WTC11 (cell line): ENCODE measurements at regions of chr9 and their contacts with region 1.

Region 1: GRCh38 chr9:33225319-33226149 is 14.4 kb upstream of the SPINK4 start:
- DNase-seq: peak; percentile 52
- ATAC-seq: no peak
- H3K4me3 Mint-ChIP-seq: no peak overlapping the region
- H3K27ac Mint-ChIP-seq: no peak overlapping the region; the same call in 1 of the 2 replicates
- H3K4me1 Mint-ChIP-seq: no peaks in the 10 kb centered on the region
- H3K27me3 Mint-ChIP-seq: no peaks in the 10 kb centered on the region
- CTCF ChIP-seq: peak; percentile 53

Region 2: DNA sequence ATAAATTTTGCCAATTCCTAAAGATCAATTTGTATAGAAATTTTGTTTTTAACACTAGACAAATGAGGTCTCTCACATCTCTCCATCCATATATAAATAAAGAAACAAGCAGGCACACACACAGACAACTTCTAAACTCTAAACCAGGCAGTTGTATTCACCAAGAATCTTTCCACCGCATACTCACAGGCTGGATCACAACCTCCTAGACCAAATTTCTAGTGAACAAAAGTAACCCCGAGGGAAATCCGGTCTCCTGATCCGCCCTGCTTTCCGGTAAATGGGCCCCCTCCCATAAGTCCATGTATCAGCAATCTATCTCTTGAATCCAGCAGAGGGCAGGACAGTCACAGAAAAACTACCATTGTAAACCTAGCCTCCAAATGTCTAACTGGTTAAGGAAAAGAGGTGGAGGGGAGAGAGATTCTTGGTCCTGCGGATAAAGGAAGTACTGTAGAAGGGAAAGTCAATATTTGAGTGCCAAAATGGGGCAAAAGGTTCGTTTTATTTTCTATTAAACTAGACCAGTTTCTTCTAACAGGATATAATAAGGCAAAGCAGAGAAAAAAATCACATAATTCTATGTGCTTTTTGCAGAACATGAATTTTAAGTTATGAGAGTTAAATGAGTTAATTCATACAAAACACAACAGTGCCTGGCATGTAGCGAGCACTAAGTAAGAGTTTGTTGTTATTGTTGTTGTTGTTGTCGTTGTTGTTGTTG is 144.2 kb before region 1 on chr9:
- CTCF ChIA-PET with region 1: interaction called, 11 read pairs
- POLR2A ChIA-PET with region 1: no interaction called
- DNase-seq: peak; percentile 42
- ATAC-seq: peak; percentile 70
- H3K4me3 Mint-ChIP-seq: no peak overlapping the region
- H3K27ac Mint-ChIP-seq: no peak overlapping the region
- H3K4me1 Mint-ChIP-seq: no peaks in the 10 kb centered on the region
- H3K27me3 Mint-ChIP-seq: peaks cover 10% of the 10 kb centered on the region
- CTCF ChIP-seq: peak; percentile 26; the same call in 1 of the 2 replicates

Region 3: DNA sequence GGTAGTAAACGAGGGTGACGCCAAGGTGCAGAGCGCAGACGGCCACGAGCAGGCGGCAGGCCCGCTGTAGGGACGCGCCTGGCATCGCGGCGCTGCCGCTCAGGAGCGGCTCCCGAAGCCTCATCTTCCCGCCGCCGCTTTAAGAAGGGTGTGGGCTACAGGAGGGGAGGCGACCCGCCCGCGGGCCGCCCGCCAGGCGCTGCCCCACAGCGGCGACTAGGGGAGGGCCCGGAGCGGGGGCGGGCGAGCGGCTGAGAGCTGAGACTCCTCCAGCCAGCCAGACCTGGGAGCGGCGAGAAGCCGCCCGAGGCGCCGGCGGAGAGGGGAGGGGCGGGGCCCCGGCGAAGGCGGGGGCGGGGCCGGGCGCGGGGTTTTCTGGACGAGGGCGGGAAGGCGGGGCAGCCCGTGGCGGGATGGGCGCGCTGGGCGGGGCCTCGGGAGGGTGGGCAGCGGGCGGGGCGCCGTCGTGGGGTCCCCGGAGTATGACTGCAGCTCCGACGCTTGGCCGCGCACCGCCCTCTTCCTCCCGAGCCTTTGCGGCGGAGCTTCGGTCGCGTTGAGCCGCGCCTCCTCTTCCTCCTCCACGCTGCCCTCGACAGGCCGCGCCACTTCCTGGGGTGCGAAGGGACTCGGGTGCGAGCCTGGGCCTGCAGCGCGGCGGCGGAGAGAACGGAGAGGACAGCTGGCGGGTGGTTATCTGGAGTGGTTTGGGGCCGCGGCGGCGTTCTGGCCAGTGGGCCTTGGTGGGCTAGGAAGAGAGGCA is 58.3 kb before region 1 on chr9 and contains the start of gene B4GALT1:
- CTCF ChIA-PET with region 1: interaction called, 10 read pairs
- POLR2A ChIA-PET with region 1: no interaction called
- DNase-seq: peak; percentile 93
- ATAC-seq: peak; percentile 79
- H3K4me3 Mint-ChIP-seq: peak within 1 kb of the TSS; percentile 80
- H3K27ac Mint-ChIP-seq: no peak within 1 kb of the TSS
- H3K4me1 Mint-ChIP-seq: peaks cover 18% of the 10 kb centered on the region
- H3K27me3 Mint-ChIP-seq: peaks cover 32% of the 10 kb centered on the region
- CTCF ChIP-seq: no peak
- total RNA-seq, gene B4GALT1: 19.1 to 20.2 TPM (median 19.8 TPM) in 3 replicates

Region 4: DNA sequence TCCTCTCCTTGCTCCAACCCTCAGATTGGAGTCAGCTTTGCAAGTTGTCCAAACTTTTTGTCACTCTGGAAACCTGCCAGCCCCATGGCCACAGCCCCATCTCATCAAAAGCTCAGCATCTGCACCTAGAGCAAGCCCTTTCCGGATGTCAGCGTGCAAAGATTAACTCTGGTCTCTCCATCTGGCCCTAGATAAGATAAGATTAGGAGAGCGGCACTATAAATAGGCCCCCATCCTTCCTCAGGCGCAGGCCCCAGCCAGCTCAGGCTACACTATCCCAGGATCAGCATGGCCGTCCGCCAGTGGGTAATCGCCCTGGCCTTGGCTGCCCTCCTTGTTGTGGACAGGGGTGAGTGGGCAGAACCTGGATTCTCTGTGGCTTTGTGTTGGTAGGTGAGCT is 14.4 kb after region 1 on chr9 and contains the start of gene SPINK4:
- CTCF ChIA-PET with region 1: interaction called, 12 read pairs
- POLR2A ChIA-PET with region 1: no interaction called
- DNase-seq: no peak
- ATAC-seq: no peak
- H3K4me3 Mint-ChIP-seq: no peak within 1 kb of the TSS
- H3K27ac Mint-ChIP-seq: no peak within 1 kb of the TSS
- H3K4me1 Mint-ChIP-seq: no peaks in the 10 kb centered on the region
- H3K27me3 Mint-ChIP-seq: peaks cover 5% of the 10 kb centered on the region
- CTCF ChIP-seq: no peak
- total RNA-seq, gene SPINK4: not detected in 3 replicates

Region 5: DNA sequence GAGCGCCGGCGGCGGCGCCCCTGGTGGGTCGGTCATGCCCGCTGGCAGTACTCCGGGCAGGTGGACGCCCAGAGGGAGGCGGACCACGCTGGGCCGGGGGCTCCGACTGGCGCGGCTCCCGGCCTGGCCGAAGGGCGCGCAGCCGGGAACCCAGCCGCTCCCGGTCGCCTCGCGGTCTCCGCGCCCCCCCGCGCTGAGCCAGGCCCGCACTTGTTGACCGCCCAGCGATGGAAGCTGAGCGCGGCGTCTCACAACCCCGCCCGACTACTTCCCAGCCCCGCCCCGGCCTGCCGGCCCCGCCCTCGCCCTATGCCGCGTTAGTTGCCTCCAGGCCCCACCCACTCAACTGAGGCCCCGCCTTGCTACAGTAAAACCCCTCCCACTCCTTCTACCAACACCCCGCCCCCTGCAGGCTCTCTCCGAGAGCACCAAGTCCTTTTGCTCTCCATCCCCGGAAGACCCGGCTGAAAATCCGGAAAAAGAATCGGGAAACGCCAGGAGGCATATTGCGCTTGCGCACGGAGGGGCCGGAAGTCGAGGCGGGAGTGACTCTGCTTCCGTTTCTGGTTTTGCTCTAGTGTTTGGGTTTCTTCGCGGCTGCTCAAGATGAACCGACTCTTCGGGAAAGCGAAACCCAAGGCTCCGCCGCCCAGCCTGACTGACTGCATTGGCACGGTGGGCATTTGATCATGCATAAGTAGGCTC is 39.1 kb after region 1 on chr9 and contains the starts of genes BAG1 and CHMP5:
- CTCF ChIA-PET with region 1: no interaction called
- POLR2A ChIA-PET with region 1: no interaction called
- DNase-seq: peak; percentile 100
- ATAC-seq: peak; percentile 99
- H3K4me3 Mint-ChIP-seq: peak within 1 kb of the TSS; percentile 98
- H3K27ac Mint-ChIP-seq: peak within 1 kb of the TSS; percentile 95
- H3K4me1 Mint-ChIP-seq: peaks cover 13% of the 10 kb centered on the region
- H3K27me3 Mint-ChIP-seq: no peaks in the 10 kb centered on the region
- CTCF ChIP-seq: no peak
- total RNA-seq, gene BAG1: 44.7 to 52.9 TPM (median 48.2 TPM) in 3 replicates
- total RNA-seq, gene CHMP5: 46.2 to 50.6 TPM (median 46.9 TPM) in 3 replicates